ENCODE measurements at regions of chr4 and their contacts with region 1.

Region 1: DNA sequence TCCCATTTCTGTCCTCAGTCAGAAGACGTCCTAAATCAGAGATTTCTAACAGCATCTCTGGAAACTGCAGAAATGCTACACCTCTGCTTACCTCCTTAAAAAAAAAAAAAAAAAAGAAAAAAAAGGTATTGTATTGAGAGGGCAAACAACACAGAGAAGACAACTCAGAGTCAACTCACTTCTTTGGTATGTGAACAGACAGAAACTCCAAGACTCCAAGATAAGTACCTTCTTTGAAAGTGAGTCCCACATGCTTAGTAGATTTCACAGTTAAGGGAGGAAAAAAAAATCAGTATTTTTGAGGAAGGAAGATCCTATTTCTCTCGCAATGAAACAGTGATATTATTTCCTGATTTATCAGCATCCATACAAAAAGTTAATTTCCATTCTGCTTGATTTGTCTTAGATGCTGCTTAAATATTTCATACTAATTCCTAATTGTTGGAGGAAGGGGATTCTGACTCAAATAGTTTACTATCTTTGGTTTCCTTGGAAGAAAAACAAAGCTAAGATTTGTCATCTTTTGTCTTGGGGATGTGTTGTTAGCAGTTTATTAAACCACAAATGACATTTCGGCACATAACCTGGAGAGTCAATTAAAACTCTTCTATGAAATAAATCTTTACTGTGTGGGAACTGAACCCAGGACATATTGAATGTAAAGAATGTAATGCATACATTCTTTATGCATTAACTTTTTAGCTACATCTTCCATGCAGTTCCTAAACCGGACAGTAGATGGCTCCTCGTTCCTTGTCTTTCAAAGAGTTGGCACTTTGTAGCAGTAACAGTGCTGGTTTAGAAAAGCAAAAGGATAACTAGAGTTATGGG is 4.7 kb downstream of the RASGEF1B start:
- DNase-seq: peak in 3 of 6 donors; percentile 30 to 61 (median 44)
- ATAC-seq: no peak
- H3K4me3 ChIP-seq: no peak overlapping the region
- H3K27ac ChIP-seq: no peak overlapping the region
- H3K4me1 ChIP-seq: peaks cover 0 to 9% (median 0%) of the 10 kb centered on the region in 3 donors
- H3K27me3 ChIP-seq: no peaks in the 10 kb centered on the region
- CTCF ChIP-seq: peak; percentile 65 to 84 (median 78)

Region 2: GRCh38 chr4:81844717-81845116 is 377.7 kb after region 1 on chr4:
- intact Hi-C with region 1: loop called in 1 of 3 experiments (anchors 5 kb)
- DNase-seq: peak in 5 of 6 donors; percentile 55 to 81 (median 67)
- ATAC-seq: peak; percentile 96 to 100 (median 98)
- H3K4me3 ChIP-seq: no peak overlapping the region
- H3K27ac ChIP-seq: no peak overlapping the region
- H3K4me1 ChIP-seq: no peaks in the 10 kb centered on the region
- H3K27me3 ChIP-seq: no peaks in the 10 kb centered on the region
- CTCF ChIP-seq: peak; percentile 43 to 72 (median 55)

Region 3: GRCh38 chr4:81852031-81852715 is 385.1 kb after region 1 on chr4:
- intact Hi-C with region 1: loop called in 1 of 3 experiments (anchors 10 kb)
- DNase-seq: no peak
- ATAC-seq: no peak
- H3K4me3 ChIP-seq: no peak overlapping the region
- H3K27ac ChIP-seq: no peak overlapping the region
- H3K4me1 ChIP-seq: no peaks in the 10 kb centered on the region
- H3K27me3 ChIP-seq: no peaks in the 10 kb centered on the region
- CTCF ChIP-seq: no peak

Region 4: DNA sequence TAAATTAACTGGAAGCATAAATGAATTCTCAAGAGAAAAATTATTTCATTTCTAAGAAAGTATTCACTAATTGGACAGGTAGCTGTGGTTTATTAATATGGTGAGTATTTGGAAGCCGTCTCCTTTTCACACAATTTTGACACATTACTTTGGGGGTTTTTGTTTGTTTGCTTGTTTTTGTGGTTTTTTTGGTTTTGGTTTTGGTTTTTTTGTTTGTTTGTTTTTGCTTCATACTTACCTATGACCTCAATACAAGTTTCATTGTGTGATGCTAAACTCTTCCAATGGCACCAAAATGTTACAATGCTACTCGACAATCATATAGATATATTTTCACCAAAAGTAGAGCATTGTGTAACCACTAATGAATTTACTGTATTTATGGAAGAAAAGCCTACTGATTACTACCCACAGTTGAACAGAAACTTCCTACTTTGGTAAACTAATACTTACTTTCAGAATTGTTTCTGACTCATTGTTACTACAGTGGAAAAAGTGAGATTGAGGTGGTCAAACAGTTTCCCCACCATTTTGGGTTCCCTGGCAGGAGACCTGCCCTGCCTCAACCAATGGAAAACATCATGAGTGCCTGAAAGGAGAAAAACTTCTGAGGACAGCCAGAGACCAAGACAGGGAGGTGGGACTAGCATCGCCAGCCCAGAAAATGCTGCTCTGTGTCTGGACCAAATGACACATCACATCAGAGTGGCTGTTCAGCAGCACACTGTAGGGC is 463.6 kb after region 1 on chr4:
- intact Hi-C with region 1: no loop called
- DNase-seq: no peak
- ATAC-seq: no peak
- H3K4me3 ChIP-seq: no peak overlapping the region
- H3K27ac ChIP-seq: no peak overlapping the region
- H3K4me1 ChIP-seq: no peaks in the 10 kb centered on the region
- H3K27me3 ChIP-seq: no peaks in the 10 kb centered on the region
- CTCF ChIP-seq: no peak

Region 5: DNA sequence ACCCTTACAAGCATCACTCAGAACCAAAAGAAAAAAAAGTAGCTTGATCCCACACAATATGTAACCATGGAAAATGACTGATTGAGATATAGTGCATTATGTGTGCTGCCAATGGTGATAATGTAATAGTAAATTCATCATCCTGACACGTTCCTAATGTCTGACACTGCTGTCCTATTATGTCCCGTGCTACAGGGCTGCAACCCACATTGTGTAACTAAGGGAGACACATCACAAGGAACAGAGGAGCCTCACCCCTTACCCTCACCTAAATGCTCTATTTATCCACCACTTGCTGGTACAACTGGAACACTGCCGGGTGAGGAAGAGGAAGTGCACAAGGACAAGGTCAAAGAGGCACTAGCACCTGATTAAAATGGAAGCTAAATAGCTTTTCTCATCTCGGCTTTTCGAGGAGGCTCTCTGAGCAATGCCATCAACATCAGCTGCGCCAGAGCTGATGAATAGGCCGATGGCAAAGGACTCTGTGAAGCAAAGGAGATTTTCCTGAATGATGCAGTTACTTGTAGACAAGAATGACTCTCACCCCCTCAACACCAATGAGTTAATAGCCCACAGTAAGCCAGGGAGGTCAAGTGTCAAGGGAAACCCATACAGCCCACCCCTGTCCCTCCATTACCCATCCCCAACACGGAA is 725.1 kb after region 1 on chr4:
- intact Hi-C with region 1: loop called in 1 of 3 experiments (anchors 10 kb)
- DNase-seq: no peak
- ATAC-seq: no peak
- H3K4me3 ChIP-seq: no peak overlapping the region
- H3K27ac ChIP-seq: no peak overlapping the region
- H3K4me1 ChIP-seq: no peaks in the 10 kb centered on the region
- H3K27me3 ChIP-seq: no peaks in the 10 kb centered on the region
- CTCF ChIP-seq: no peak

Measured in pancreas (tissue), 10 donors.